Psoas muscle (tissue), 8 donors: ENCODE measurements at regions of chr2 and their contacts with region 1.

Region 1: DNA sequence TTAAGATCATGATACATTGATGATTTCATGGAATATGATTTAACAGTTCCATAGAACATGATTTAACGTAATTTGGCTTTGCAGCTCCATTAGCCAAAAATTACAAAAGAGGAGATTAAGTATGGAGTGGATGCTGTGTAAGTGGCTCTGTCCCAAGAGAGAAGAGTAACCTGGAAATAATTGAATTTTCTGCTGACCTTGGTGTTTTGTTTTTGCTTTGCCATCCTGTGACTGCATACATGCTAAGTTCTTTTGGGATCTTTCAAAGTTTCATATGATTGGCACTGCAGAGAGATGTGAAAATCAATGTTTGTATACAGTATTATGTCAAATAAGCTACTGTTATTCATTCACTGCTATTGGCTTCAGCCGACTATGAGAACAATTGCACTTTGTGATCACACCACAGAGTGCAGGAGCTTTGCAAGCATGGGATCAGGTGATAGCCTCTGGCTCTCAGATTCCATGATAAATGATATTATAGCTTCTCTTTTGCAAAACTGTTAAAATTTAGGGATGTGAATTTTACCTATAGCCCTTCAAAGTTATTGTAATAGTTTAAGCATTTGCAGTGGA is 46.1 kb upstream of the TMEM87B start:
- DNase-seq: no peak
- ATAC-seq: no peak
- H3K4me3 ChIP-seq: no peak overlapping the region
- H3K27ac ChIP-seq: no peak overlapping the region
- H3K4me1 ChIP-seq: no peaks in the 10 kb centered on the region
- H3K27me3 ChIP-seq: no peaks in the 10 kb centered on the region
- CTCF ChIP-seq: no peak

Region 2: DNA sequence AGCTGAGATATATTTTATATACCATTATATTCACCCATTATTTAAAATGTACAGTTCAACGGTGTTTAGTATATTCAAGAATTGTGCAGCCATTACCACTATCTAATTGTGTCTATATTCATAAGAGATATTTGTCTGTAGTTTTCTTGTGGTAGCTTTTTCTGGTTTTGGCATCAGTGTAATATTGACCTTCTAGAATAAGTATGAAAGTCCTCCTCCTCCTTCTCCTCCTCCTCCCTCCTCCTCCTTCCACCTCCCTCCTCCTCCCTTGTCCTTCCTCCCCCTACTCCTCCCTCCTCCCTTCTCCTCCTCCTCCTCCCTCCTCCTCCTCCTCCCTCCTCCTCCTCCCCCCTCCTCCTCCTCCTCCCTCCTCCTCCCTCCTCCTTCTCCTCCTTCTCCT is 38.5 kb before region 1 on chr2:
- intact Hi-C with region 1: loop called in 1 of 2 experiments (anchors 2 kb)
- DNase-seq: no peak
- ATAC-seq: no peak
- H3K4me3 ChIP-seq: no peak overlapping the region
- H3K27ac ChIP-seq: no peak overlapping the region
- H3K4me1 ChIP-seq: peaks cover 16% of the 10 kb centered on the region
- H3K27me3 ChIP-seq: no peaks in the 10 kb centered on the region
- CTCF ChIP-seq: no peak

Region 3: DNA sequence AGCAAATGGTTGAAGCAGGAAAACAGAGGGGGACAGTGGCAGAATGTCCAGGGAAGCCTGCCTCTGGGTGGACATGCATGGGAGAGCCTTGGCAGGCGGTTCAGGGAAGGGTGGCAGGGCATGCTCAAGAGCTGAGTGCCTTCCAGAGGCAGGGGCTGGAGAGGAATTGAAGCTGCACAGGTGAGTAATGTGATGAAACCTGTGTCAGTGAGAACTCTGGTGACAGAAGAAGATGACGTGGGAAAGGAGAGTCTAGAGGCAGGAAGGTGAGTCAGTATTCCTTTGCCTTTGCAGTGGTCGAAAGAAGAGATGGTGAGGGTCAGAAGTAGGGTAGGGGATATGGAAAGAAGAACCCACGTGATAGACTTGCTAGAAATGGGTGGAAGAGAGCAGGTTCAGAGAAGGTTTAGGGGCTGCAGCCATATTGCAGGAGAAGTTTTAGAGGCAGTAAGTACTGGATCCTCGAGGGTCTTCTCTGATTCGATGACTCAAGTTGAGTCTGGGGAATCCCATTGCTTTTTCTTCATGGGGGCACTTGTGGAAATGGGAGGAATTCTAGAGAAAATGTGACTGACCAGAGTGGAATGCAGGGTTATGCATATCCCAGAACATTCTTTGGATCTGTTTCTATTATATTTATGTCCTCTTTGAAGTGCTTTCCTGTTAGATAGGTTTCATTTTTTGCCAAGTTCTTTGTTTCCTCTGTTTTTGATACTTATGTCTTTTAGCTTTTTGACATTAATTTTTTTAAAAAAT is 83.5 kb after region 1 on chr2:
- intact Hi-C with region 1: no loop called
- DNase-seq: no peak
- ATAC-seq: no peak
- H3K4me3 ChIP-seq: no peak overlapping the region
- H3K27ac ChIP-seq: no peak overlapping the region
- H3K4me1 ChIP-seq: no peaks in the 10 kb centered on the region
- H3K27me3 ChIP-seq: no peaks in the 10 kb centered on the region
- CTCF ChIP-seq: no peak

Region 4: DNA sequence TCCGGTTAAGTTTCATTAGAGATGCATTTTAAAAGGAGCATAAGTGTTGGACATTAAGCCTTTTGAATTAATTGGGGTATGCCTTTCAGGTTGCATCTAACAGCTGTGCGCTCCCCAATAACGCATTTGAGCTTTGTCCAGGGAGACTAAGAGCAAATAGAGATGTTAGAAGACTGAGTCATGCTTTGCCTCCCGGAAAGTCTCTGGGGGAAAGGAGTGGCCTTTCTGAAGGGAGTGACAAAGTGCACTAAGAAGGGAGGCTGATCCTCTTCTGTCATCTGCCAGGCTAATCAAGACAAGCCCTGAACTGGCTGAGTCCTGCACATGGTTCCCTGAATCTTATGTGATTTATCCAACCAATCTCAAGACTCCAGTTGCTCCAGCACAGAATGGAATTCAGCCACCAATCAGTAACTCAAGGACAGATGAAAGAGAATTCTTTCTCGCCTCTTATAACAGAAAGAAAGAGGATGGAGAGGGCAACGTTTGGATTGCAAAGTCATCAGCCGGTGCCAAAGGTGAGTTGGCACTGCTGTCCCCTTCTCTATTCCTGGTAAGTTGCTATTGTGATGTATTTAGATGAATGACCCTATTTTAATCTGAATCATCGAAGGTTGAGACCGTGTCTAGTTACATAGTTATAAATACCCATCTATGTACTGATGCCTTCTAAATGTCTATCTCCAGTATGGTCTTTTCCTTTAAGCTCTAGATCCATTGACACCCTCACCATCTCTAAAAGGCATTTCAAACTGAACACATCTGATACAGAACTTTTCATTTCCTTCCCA is 485.1 kb after region 1 on chr2:
- intact Hi-C with region 1: no loop called
- DNase-seq: no peak
- ATAC-seq: peak; percentile 87 to 95 (median 89)
- H3K4me3 ChIP-seq: no peak overlapping the region
- H3K27ac ChIP-seq: peak overlapping the region; percentile 56
- H3K4me1 ChIP-seq: peaks cover 8% of the 10 kb centered on the region
- H3K27me3 ChIP-seq: no peaks in the 10 kb centered on the region
- CTCF ChIP-seq: no peak